ENCODE measurements at regions of chr14 and their contacts with region 1.

Region 1: DNA sequence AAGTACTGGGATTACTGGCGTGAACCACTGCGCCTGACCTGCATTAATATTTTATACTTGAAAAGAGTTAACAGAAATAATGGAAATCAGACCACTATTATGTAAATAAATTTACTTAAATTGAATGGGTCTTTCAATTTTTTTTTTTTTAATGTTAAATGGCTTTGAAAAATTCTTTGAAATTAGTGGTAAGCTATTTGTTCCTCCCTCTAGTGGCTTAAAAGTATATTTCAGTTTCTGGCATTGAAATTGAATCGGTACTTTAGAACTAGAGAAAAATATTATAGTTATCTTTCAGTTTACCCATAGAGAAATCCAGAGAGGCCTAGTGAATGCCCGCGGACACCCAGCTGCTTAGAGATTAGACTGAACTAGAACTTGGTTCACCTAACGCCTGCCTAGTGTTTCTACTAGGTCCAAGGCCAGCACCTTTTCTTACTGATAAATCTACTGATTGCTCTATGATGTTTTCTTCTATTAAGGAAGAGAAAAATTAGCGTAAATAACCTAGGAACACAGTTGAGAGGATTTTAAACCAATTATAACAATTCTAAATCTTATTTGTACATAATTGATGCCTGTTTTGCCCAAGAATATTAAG is 106.5 kb downstream of the EML1 start:
- DNase-seq: peak in 3 of 5 donors; percentile 5 to 9 (median 8)
- H3K4me3 ChIP-seq: no peak overlapping the region
- H3K4me3 Mint-ChIP-seq: no peak overlapping the region
- H3K27ac ChIP-seq: no peak overlapping the region
- H3K27ac Mint-ChIP-seq: no peak overlapping the region
- H3K4me1 ChIP-seq: no peaks in the 10 kb centered on the region
- H3K4me1 Mint-ChIP-seq: no peaks in the 10 kb centered on the region
- H3K27me3 ChIP-seq: no peaks in the 10 kb centered on the region
- H3K27me3 Mint-ChIP-seq: peaks cover 2 to 6% of the 10 kb centered on the region in 2 donors

Region 2: GRCh38 chr14:99884834-99885648 is 14.6 kb before region 1 on chr14:
- CTCF ChIA-PET with region 1: interaction called, 20 read pairs
- POLR2A ChIA-PET with region 1: no interaction called
- intact Hi-C with region 1: no loop called
- DNase-seq: peak; percentile 41 to 64 (median 58)
- H3K4me3 ChIP-seq: no peak overlapping the region
- H3K4me3 Mint-ChIP-seq: no peak overlapping the region
- H3K27ac ChIP-seq: no peak overlapping the region
- H3K27ac Mint-ChIP-seq: no peak overlapping the region
- H3K4me1 ChIP-seq: no peaks in the 10 kb centered on the region
- H3K4me1 Mint-ChIP-seq: no peaks in the 10 kb centered on the region
- H3K27me3 ChIP-seq: peaks cover 4% of the 10 kb centered on the region
- H3K27me3 Mint-ChIP-seq: peaks cover 12 to 13% of the 10 kb centered on the region in 2 donors

Region 3: DNA sequence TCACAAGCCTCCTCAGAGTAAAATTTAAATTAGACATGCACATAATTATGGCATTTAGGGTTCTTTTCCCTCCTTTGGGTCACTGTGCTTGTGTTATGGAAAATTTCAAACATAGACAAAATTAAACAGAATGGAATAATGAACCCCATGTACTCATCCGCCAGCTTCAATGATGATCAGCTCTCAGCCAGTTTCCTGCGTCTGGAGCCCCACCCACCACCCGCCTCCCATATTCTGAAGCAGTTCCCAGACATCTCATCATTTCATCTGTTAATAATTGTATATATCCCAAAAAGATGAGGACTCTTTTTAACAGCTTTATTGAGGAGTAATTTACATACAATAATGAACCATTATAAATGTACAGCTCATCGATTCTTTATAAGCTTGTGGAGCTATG is 21.7 kb after region 1 on chr14:
- CTCF ChIA-PET with region 1: no interaction called
- POLR2A ChIA-PET with region 1: no interaction called
- intact Hi-C with region 1: no loop called
- DNase-seq: no peak
- H3K4me3 ChIP-seq: no peak overlapping the region
- H3K4me3 Mint-ChIP-seq: no peak overlapping the region
- H3K27ac ChIP-seq: no peak overlapping the region
- H3K27ac Mint-ChIP-seq: no peak overlapping the region
- H3K4me1 ChIP-seq: no peaks in the 10 kb centered on the region
- H3K4me1 Mint-ChIP-seq: no peaks in the 10 kb centered on the region
- H3K27me3 ChIP-seq: no peaks in the 10 kb centered on the region
- H3K27me3 Mint-ChIP-seq: peaks cover 0 to 6% of the 10 kb centered on the region in 2 donors

Measured in CD4-positive, alpha-beta memory T cell (primary cell).